Right ventricle myocardium superior (tissue), 1 donor: ENCODE measurements at regions of chr3 and their contacts with region 1.

Region 1: DNA sequence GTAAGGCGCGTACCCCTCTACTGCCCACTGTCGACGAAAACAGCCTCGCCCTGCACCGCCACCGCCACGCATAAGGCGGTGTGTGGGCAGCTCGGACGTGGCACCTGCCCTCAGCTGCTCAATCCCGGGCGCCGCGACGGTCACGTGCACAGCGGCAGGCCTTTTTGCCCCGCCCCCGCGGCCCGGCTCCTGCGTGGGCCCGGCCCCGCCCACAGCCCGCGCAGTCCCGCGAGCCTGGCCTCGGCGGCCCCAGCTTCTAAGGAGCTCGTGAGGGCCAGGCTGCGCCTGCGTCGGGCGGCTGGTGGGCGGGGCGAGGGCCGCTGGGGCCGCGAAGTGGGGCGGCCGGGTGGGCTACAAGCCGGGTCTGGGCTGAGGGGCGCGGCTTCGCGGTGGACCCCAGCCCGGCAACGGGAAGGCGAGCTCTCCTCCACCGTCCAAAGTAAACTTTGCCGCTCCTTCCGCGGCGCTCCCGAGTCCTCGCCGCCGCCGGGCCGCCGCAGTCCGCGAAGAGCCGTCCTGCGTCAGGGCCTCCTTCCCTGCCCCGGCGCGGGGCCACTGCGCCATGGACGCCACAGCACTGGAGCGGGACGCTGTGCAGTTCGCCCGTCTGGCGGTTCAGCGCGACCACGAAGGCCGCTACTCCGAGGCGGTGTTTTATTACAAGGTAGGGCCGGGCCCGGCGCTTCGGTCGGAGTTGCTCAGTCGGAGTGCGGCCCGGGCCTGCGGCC is at the start of gene CAPN7:
- DNase-seq: peak; percentile 98
- ATAC-seq: peak; percentile 99
- total RNA-seq, gene CAPN7: 28.1 TPM

Region 2: DNA sequence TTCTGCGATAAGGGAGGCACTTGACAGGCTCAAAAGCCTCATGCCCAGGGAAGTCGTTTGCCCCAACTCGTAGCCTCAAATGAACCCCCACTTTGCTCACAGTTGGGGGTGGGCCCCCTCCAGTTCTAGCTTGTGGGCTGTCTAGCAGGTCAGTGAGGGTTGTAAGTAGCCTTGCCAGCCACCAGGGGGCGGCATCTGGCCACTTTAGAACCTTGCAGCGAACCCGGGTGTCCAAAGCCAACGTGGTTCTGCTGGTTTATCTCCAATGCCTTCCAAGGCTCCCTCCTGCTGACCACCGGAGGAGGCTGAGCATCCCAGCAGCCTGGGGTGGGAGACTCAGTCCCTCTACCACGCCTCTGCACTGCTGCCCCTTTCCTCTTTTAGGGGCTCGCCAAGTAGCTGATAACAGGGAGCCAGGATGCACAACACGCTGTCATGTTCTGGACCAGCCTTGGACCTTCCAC is 98.0 kb before region 1 on chr3:
- intact Hi-C with region 1: loop called (anchors 10 kb)
- DNase-seq: peak; percentile 76
- ATAC-seq: peak; percentile 85

Region 3: GRCh38 chr3:15332405-15333098 is 126.5 kb after region 1 on chr3 and contains the start of gene SH3BP5:
- intact Hi-C with region 1: loop called (anchors 5 kb)
- DNase-seq: peak; percentile 88
- ATAC-seq: peak; percentile 94
- total RNA-seq, gene SH3BP5: 10.4 TPM

Region 4: GRCh38 chr3:15405448-15406050 is 199.5 kb after region 1 on chr3:
- intact Hi-C with region 1: loop called (anchors 5 kb)
- DNase-seq: no peak
- ATAC-seq: peak; percentile 76

Region 5: DNA sequence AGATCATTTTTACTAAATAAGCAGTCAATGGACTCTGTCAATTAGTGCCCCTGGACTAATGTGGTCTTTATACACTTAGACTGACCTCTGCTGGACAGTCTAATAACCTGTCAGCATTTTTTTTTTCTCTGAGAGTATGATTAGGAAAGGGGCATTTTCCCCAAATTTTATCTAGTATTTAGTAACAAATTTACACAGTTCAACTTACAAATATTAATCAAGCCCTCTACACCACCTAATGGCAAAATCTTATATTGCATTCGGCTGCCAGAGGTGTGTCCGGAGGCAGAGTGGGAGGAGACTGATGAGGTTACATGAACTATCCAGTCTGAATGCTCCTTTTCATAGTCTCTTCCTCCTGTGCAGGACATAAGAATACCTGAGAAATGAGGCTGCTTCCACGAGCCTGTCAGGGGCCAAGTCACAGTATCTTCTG is 351.4 kb after region 1 on chr3:
- intact Hi-C with region 1: loop called (anchors 5 kb)
- DNase-seq: no peak
- ATAC-seq: peak; percentile 77